CD4-positive, alpha-beta memory T cell (primary cell): ENCODE measurements at regions of chr15 and their contacts with region 1.

Region 1: GRCh38 chr15:75201609-75202250 is at the start of gene C15orf39:
- DNase-seq: peak; percentile 71 to 87 (median 83)
- H3K4me3 ChIP-seq: peak within 1 kb of the TSS; percentile 65 to 70
- H3K4me3 Mint-ChIP-seq: peak within 1 kb of the TSS; percentile 89 to 97 (median 94)
- H3K27ac ChIP-seq: peak within 1 kb of the TSS; percentile 69
- H3K27ac Mint-ChIP-seq: peak within 1 kb of the TSS; percentile 90 to 96 (median 93)
- H3K4me1 ChIP-seq: peaks cover 40% of the 10 kb centered on the region
- H3K4me1 Mint-ChIP-seq: peaks cover 16 to 58% (median 30%) of the 10 kb centered on the region in 4 donors
- H3K27me3 ChIP-seq: no peaks in the 10 kb centered on the region
- H3K27me3 Mint-ChIP-seq: no peaks in the 10 kb centered on the region
- total RNA-seq, gene C15orf39: 25.9 to 27.0 TPM

Region 2: GRCh38 chr15:74540761-74541493 is 660.8 kb before region 1 on chr15 and contains the start of gene ARID3B:
- CTCF ChIA-PET with region 1: no interaction called
- POLR2A ChIA-PET with region 1: no interaction called
- intact Hi-C with region 1: loop called (anchors 2 kb)
- DNase-seq: peak; percentile 89 to 96 (median 93)
- H3K4me3 ChIP-seq: peak within 1 kb of the TSS; percentile 64 to 79
- H3K4me3 Mint-ChIP-seq: peak within 1 kb of the TSS; percentile 94 to 100 (median 98)
- H3K27ac ChIP-seq: peak within 1 kb of the TSS; percentile 77
- H3K27ac Mint-ChIP-seq: peak within 1 kb of the TSS; percentile 87 to 99 (median 95)
- H3K4me1 ChIP-seq: peaks cover 39% of the 10 kb centered on the region
- H3K4me1 Mint-ChIP-seq: peaks cover 37 to 62% (median 51%) of the 10 kb centered on the region in 4 donors
- H3K27me3 ChIP-seq: no peaks in the 10 kb centered on the region
- H3K27me3 Mint-ChIP-seq: no peaks in the 10 kb centered on the region
- total RNA-seq, gene ARID3B: 32.9 TPM

Region 3: GRCh38 chr15:74956648-74957300 is 245.0 kb before region 1 on chr15 and contains the start of gene RPP25:
- CTCF ChIA-PET with region 1: interaction called, 4 read pairs
- POLR2A ChIA-PET with region 1: interaction called, 6 read pairs
- intact Hi-C with region 1: loop called (anchors 2 kb)
- DNase-seq: peak; percentile 43 to 56 (median 52)
- H3K4me3 ChIP-seq: peak within 1 kb of the TSS; percentile 12 to 68
- H3K4me3 Mint-ChIP-seq: peak within 1 kb of the TSS; percentile 75 to 82 (median 80)
- H3K27ac ChIP-seq: no peak within 1 kb of the TSS
- H3K27ac Mint-ChIP-seq: no peak within 1 kb of the TSS
- H3K4me1 ChIP-seq: peaks cover 40% of the 10 kb centered on the region
- H3K4me1 Mint-ChIP-seq: peaks cover 6 to 35% (median 19%) of the 10 kb centered on the region in 4 donors
- H3K27me3 ChIP-seq: peaks cover 19% of the 10 kb centered on the region
- H3K27me3 Mint-ChIP-seq: peaks cover 19 to 20% of the 10 kb centered on the region in 2 donors
- total RNA-seq, gene RPP25: 2.6 to 2.8 TPM

Region 4: DNA sequence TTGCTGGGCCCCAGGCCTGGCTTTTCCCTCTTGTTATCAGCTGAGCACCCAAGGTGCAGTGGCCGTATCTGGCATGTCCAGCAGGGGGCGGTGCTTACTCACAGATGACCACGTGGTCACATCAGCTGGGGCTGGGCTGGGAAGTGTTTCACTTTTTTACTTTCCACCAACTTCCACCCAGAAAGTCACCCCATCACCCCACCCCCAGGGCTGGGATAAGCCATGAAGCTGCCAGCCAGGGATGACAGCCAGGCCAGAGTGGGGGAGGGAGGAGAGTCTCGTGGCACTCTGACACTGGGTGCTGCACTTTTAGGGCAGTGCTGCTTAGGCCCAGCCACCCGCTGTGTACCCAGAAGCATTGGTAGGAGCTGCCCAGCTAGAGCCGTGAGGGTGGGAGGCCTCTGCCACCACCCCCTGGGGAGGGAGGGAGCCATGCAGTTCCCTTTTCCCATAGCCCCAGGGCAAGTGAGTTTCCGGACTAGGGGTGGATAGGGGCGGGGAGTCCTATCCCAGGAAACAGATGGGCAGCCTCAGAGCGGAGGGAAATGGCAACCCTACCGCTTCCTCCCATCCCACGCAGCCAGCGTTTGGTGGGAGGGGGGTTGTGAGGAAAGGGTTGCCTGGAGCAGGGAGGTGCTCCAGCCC is 172.2 kb before region 1 on chr15:
- CTCF ChIA-PET with region 1: interaction called, 126 read pairs
- POLR2A ChIA-PET with region 1: interaction called, 23 read pairs
- intact Hi-C with region 1: loop called (anchors 1 kb)
- DNase-seq: peak; percentile 75 to 84 (median 79)
- H3K4me3 ChIP-seq: no peak overlapping the region
- H3K4me3 Mint-ChIP-seq: peak overlapping the region in 1 of 8 donors; percentile 49
- H3K27ac ChIP-seq: no peak overlapping the region
- H3K27ac Mint-ChIP-seq: peak overlapping the region in 3 of 7 donors; percentile 37 to 71 (median 64)
- H3K4me1 ChIP-seq: peaks cover 16% of the 10 kb centered on the region
- H3K4me1 Mint-ChIP-seq: peaks cover 9 to 19% (median 13%) of the 10 kb centered on the region in 4 donors
- H3K27me3 ChIP-seq: no peaks in the 10 kb centered on the region
- H3K27me3 Mint-ChIP-seq: no peaks in the 10 kb centered on the region

Region 5: DNA sequence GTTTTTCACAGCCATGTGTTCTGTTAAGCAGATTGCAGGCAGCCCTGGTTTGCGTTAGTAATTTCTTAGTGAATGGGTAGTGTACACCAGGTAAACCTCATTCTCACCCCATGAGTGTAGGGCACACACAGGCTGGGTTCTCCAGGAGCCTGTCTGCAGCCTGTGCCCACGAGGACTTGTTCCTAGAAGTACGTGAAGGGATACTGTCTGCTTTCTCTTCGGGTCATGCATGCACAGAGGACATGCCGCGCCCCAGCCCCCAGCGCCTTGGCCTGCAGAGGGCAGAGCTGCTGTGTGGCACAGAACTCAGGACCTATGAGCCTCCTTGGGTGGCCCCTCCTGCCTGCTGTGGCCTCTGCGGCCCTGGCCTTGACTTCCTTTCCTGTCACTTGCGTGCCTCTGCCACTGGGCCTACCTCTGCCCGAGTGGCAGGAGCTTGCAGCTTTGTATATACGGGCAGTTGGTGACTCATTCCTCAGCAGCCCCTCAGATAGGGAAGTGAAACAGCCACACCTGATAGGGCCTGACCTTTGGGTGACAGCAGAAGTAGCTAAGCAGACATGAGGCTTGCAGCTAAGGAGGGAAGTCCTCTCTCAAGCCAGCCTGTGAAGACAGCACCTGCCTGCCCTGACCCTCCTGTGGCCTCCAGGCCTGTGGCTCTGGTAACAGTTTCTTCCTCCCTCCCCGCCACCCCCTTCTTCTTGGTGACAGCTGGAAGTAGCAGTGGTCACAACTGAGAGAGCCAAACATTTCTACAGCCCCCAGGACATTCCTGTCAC is 158.8 kb before region 1 on chr15:
- CTCF ChIA-PET with region 1: interaction called, 13 read pairs
- POLR2A ChIA-PET with region 1: interaction called, 4 read pairs
- intact Hi-C with region 1: loop called (anchors 1 kb)
- DNase-seq: peak; percentile 31 to 60 (median 37)
- H3K4me3 ChIP-seq: no peak overlapping the region
- H3K4me3 Mint-ChIP-seq: peak overlapping the region in 4 of 8 donors; percentile 30 to 49 (median 36)
- H3K27ac ChIP-seq: no peak overlapping the region
- H3K27ac Mint-ChIP-seq: peak overlapping the region in 5 of 7 donors; percentile 19 to 82 (median 71)
- H3K4me1 ChIP-seq: peaks cover 40% of the 10 kb centered on the region
- H3K4me1 Mint-ChIP-seq: peaks cover 13 to 52% (median 29%) of the 10 kb centered on the region in 4 donors
- H3K27me3 ChIP-seq: no peaks in the 10 kb centered on the region
- H3K27me3 Mint-ChIP-seq: no peaks in the 10 kb centered on the region